PC-9 (cell line): ENCODE measurements at regions of chr1 and their contacts with region 1.

Region 1: DNA sequence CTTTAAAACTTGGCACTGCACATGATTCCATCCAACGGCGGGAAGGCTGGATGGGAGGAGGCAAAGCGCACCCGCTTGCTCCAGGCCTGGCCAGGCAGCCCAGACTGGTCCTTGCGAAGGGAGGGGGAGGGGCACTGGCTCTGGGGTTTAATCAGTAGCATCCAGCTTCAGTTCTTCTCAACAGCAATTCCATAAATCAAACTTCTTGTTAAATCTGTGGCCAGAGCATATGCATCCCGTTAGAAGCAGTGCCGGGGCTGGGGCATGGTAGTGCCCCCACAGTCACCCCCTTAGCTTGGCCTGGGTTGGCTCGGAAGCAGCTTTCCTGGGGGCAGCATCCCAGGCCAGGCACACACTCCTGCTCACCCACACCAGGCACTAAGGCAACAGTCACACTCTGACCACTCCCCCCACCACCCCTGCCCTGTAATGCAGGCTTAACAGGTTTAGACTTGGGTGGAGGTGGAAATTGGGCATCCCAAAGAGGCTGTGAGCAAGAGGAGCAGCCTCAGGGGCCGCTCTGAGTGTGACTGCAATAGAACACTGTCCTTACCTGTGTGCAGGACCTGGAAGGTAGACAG is 94.1 kb upstream of the CASZ1 start:
- DNase-seq: peak; percentile 71 to 84
- H3K4me3 ChIP-seq: no peak overlapping the region
- H3K27ac ChIP-seq: peak overlapping the region; percentile 69
- H3K4me1 ChIP-seq: peaks cover 28% of the 10 kb centered on the region
- H3K27me3 ChIP-seq: no peaks in the 10 kb centered on the region
- CTCF ChIP-seq: no peak

Region 2: GRCh38 chr1:10651389-10651766 is 239.2 kb before region 1 on chr1:
- CTCF ChIA-PET with region 1: no interaction called
- POLR2A ChIA-PET with region 1: no interaction called
- intact Hi-C with region 1: no loop called
- DNase-seq: no peak
- H3K4me3 ChIP-seq: no peak overlapping the region
- H3K27ac ChIP-seq: no peak overlapping the region
- H3K4me1 ChIP-seq: no peaks in the 10 kb centered on the region
- H3K27me3 ChIP-seq: no peaks in the 10 kb centered on the region
- CTCF ChIP-seq: no peak

Region 3: GRCh38 chr1:10816743-10817369 is 73.7 kb before region 1 on chr1:
- CTCF ChIA-PET with region 1: interaction called, 15 read pairs
- POLR2A ChIA-PET with region 1: no interaction called
- intact Hi-C with region 1: no loop called
- DNase-seq: no peak
- H3K4me3 ChIP-seq: no peak overlapping the region
- H3K27ac ChIP-seq: no peak overlapping the region
- H3K4me1 ChIP-seq: no peaks in the 10 kb centered on the region
- H3K27me3 ChIP-seq: no peaks in the 10 kb centered on the region
- CTCF ChIP-seq: no peak

Region 4: DNA sequence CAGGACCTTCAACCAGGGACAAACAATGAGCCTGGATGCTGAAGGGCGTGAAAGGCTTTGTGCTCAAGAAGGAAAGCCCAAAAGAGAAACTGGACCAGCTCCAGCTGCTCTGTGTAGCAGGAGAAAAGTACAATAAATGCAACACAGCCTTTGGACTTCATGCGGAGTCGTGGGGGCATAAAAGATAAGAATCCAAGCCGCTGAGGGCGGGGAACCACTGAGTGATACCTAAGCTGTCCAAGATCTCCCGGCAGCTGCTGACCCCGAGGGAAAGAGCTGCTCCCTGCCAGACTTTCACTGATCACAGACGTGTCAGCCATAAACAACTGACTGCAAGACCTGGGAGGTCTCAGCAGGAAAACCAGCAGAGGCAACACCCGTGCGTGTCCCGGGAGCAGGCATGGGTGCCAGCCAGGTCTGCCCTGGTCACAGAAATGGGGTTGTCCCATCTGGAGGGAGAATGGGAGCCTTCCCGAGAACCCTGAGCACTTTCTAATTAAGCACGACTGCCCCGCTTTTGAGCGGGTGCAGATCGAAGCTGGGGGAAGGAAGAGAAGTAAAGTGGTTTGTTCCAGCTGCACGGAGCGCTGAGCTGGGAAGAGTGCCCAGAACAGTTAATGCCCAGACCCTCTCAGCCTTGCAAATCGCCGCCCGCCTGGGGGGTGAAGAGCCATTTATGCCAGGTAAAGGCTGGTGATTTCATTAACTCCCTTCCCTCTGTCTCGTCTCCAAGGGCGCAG is 53.6 kb after region 1 on chr1:
- CTCF ChIA-PET with region 1: no interaction called
- POLR2A ChIA-PET with region 1: no interaction called
- intact Hi-C with region 1: no loop called
- DNase-seq: no peak
- H3K4me3 ChIP-seq: no peak overlapping the region
- H3K27ac ChIP-seq: no peak overlapping the region
- H3K4me1 ChIP-seq: no peaks in the 10 kb centered on the region
- H3K27me3 ChIP-seq: no peaks in the 10 kb centered on the region
- CTCF ChIP-seq: no peak